ENCODE measurements at regions of chrX and their contacts with region 1.

Region 1: DNA sequence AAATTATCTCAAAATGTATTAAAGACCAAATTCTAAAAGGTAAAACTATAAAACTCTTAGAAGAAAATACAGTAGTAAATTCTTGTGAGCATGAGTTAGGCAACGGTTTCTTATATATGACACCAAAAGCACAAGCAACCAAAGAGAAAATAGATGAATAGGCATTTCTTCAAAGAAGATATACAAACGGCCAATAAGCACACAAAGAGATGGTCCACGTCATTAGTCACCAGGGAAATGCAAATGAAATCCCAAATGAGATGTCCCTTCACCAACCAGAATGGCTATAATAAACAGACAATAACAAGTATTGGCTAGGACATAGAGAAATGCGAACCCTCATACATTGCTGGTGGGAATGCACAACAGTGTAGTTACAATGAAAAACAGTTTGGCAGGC is 44.6 kb downstream of the RAB33A start:
- DNase-seq: no peak
- H3K4me3 Mint-ChIP-seq: no peak overlapping the region
- H3K27ac Mint-ChIP-seq: no peak overlapping the region
- H3K4me1 Mint-ChIP-seq: peaks cover 20% of the 10 kb centered on the region
- H3K27me3 Mint-ChIP-seq: no peaks in the 10 kb centered on the region

Region 2: DNA sequence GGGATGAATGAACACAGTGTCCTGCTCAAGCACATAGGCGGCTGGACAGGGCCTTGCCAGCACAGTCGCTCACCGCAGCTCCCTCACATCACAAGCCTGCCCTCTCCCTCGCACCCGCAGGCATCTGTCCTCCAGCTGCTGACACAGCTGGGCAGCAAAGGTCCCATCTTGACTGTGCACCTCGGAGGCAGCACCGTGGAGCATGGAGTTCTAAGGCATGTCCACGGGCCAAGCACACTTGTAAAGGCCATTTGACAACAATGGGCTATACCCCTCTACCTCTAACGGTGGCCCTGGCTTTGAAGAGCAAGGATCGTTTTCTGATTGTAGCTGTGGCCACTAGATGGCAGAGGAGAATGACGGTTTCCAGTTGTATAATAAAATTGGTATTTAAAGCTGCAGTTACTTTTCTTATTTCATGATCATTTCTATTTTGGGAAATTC is 615.3 kb before region 1 on chrX:
- intact Hi-C with region 1: loop called (anchors 5 kb)
- DNase-seq: peak; percentile 74
- H3K4me3 Mint-ChIP-seq: no peak overlapping the region
- H3K27ac Mint-ChIP-seq: no peak overlapping the region
- H3K4me1 Mint-ChIP-seq: peaks cover 15% of the 10 kb centered on the region
- H3K27me3 Mint-ChIP-seq: no peaks in the 10 kb centered on the region

Region 3: GRCh38 chrX:130024127-130024526 is 192.2 kb before region 1 on chrX:
- intact Hi-C with region 1: no loop called
- DNase-seq: peak; percentile 95
- H3K4me3 Mint-ChIP-seq: peak overlapping the region; percentile 70
- H3K27ac Mint-ChIP-seq: peak overlapping the region; percentile 63
- H3K4me1 Mint-ChIP-seq: peaks cover 10% of the 10 kb centered on the region
- H3K27me3 Mint-ChIP-seq: no peaks in the 10 kb centered on the region

Region 4: DNA sequence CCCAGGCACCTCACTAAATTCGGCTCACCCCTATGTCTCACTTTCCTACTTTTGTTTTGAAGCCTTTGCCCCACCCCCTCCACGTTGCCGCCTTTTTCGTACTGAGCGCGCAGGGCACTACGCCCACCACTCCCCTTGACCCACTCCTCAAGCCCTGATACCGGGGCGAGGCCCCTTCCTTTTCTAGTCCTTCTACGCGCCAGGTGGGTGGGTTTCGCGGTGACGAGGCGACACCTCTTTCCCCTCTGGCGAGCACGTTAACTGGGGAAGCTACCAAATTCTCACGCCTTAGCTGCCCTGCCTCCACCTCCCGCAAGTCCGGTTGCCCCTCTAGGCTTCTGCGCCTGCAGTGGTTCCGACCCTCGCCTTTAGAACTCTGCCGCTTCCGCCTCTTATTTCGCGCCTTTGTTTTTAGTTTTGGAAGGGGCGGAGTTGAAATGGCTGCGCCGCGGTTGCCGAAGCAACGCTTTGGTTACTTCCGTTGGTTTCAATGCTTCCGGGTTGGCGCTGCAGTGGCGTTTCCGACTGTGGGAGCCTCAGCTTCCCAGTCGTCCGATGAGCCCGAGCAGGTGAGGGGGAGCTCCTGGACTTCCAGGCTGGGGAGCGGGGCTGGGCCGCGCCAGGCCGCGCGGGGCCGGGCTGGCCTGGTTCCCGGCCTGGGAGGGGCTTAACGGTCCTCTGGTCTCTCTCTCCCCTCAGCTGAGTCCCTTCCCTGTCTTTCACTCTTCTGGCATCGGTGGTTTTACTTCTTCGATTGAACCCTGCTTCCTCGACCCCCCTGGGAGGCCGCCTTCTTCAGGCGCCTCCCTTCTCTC is 123.3 kb after region 1 on chrX and contains the start of gene SLC25A14:
- intact Hi-C with region 1: no loop called
- DNase-seq: peak; percentile 92
- H3K4me3 Mint-ChIP-seq: peak within 1 kb of the TSS; percentile 95
- H3K27ac Mint-ChIP-seq: peak within 1 kb of the TSS; percentile 95
- H3K4me1 Mint-ChIP-seq: peaks cover 16% of the 10 kb centered on the region
- H3K27me3 Mint-ChIP-seq: no peaks in the 10 kb centered on the region
- total RNA-seq, gene SLC25A14: 9.1 and 11.9 TPM in 2 replicates

Measured in activated CD4-positive, alpha-beta T cell treated with anti-CD3 and anti-CD28 coated beads, Interleukin-2, amount 10 ng/mL, durations not matched to agents 24 days and 14 days (primary cell).